ENCODE measurements at regions of chr17 and their contacts with region 1.

Region 1: DNA sequence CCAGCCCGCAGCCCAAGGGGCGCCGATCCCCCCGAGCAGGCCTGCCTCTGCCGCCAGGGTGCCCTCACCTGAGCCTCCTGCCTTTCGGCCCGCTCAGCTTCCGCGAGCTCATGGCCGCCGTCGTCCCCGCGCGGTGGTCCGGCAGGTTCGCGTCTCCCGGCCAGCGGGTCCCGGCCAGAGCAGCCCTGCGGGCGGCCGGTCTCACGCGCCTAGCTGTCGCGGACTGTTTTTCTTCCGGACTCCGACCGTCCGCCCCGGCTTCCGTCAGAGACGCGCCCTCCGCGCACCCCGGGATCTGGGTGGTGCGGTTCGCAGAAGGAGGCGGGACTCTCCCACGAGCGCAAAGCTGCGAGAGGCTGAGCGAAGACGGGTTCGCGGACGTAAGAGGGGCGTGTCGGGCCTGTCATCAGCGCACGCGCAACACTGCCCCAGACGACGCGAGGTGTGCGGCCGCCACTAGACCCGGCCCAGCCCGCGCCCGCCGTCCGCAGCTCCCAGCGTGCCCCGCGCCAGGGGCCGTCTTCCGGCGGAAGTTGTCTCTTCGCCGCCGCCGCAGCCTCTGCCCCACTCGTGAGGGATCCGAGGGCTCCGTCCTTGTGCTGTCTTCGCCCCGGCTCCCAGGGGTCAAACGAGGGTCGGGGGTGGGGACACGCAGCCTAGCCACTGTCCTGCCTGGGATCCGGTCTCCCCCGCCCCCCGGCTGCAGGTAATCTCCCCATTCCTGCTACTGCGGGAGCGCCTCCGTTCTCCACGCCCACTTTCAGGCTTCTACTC is at the start of gene INPP5K:
- DNase-seq: peak; percentile 99
- ATAC-seq: peak; percentile 95
- H3K4me3 Mint-ChIP-seq: peak within 1 kb of the TSS; percentile 81
- H3K27ac Mint-ChIP-seq: peak within 1 kb of the TSS; percentile 90
- H3K4me1 Mint-ChIP-seq: peaks cover 22% of the 10 kb centered on the region
- H3K27me3 Mint-ChIP-seq: no peaks in the 10 kb centered on the region
- total RNA-seq, gene INPP5K: 40.6 to 43.4 TPM

Region 2: GRCh38 chr17:1260086-1260769 is 256.3 kb before region 1 on chr17:
- CTCF ChIA-PET with region 1: interaction called, 18 read pairs
- DNase-seq: no peak
- ATAC-seq: no peak
- H3K4me3 Mint-ChIP-seq: no peak overlapping the region
- H3K27ac Mint-ChIP-seq: no peak overlapping the region
- H3K4me1 Mint-ChIP-seq: peaks cover 42% of the 10 kb centered on the region
- H3K27me3 Mint-ChIP-seq: peaks cover 26% of the 10 kb centered on the region

Region 3: DNA sequence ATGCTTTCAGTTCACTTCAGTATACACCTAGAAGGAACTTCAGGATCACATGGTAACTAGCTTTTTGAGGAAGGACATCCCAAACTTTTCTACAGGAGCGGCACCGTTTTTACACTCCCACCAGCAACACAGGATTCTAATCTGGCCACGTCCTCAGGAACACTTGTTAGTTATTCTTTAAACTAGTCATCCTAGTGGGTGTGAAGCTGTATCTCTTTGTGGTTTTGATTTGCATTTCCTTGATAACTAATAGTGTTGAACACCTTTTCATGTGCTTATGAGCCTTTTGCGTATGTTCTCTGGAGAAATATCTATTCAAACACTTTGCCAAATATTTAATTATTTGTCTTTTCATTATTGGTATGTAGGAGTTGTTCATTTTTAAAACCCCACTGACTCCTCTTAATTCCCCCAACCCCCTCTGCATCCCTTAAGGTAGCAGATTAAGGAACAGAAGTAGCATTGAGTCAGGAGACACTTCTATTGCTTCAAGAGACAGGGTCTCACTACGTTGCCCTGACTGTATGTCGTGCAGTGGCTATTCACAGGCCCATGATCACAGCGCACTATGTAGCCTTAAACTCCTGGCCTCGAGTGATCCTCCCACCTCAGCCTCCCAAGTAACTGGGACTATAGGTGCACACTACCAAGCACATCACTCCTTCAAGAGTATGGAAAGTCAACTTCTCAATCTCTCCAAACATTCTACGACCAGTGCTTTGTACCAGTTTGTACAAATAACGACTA is 142.0 kb before region 1 on chr17:
- CTCF ChIA-PET with region 1: interaction called, 14 read pairs
- DNase-seq: no peak
- ATAC-seq: peak; percentile 48
- H3K4me3 Mint-ChIP-seq: no peak overlapping the region
- H3K27ac Mint-ChIP-seq: peak overlapping the region; percentile 41
- H3K4me1 Mint-ChIP-seq: peaks cover 71% of the 10 kb centered on the region
- H3K27me3 Mint-ChIP-seq: no peaks in the 10 kb centered on the region

Region 4: GRCh38 chr17:1488030-1488863 is 28.3 kb before region 1 on chr17:
- CTCF ChIA-PET with region 1: interaction called, 26 read pairs
- DNase-seq: peak; percentile 76
- ATAC-seq: peak; percentile 36
- H3K4me3 Mint-ChIP-seq: peak overlapping the region; percentile 74
- H3K27ac Mint-ChIP-seq: peak overlapping the region; percentile 87
- H3K4me1 Mint-ChIP-seq: peaks cover 30% of the 10 kb centered on the region
- H3K27me3 Mint-ChIP-seq: peaks cover 4% of the 10 kb centered on the region

Region 5: DNA sequence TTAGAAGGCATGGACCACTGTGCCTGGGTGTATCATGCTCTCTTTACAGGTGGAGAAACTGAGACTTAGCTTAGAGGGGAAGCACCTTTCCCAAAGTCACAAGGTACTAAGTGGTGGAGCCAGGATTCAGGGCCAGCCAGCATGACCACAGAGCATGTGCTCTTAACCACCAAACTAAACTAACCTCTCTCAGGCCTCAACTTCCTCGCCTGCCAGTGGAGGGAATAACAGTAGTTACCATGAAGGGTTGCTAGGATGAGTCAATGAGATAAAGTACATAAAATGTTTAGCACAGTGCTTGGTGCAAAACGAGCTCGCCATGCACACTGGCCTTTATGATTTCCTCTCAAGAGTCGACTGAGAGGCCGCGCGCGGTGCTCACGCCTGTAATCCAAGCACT is 17.7 kb before region 1 on chr17:
- CTCF ChIA-PET with region 1: interaction called, 14 read pairs
- DNase-seq: peak; percentile 49
- ATAC-seq: peak; percentile 46
- H3K4me3 Mint-ChIP-seq: no peak overlapping the region
- H3K27ac Mint-ChIP-seq: no peak overlapping the region
- H3K4me1 Mint-ChIP-seq: peaks cover 9% of the 10 kb centered on the region
- H3K27me3 Mint-ChIP-seq: no peaks in the 10 kb centered on the region

Region 6: GRCh38 chr17:1532836-1533602 is 16.4 kb after region 1 on chr17:
- CTCF ChIA-PET with region 1: interaction called, 13 read pairs
- DNase-seq: peak; percentile 56
- ATAC-seq: peak; percentile 68
- H3K4me3 Mint-ChIP-seq: no peak overlapping the region
- H3K27ac Mint-ChIP-seq: no peak overlapping the region
- H3K4me1 Mint-ChIP-seq: no peaks in the 10 kb centered on the region
- H3K27me3 Mint-ChIP-seq: no peaks in the 10 kb centered on the region

Region 7: GRCh38 chr17:1628856-1629646 is 112.5 kb after region 1 on chr17:
- CTCF ChIA-PET with region 1: interaction called, 24 read pairs
- DNase-seq: peak; percentile 94
- ATAC-seq: peak; percentile 83
- H3K4me3 Mint-ChIP-seq: peak overlapping the region; percentile 81
- H3K27ac Mint-ChIP-seq: peak overlapping the region; percentile 72
- H3K4me1 Mint-ChIP-seq: peaks cover 7% of the 10 kb centered on the region
- H3K27me3 Mint-ChIP-seq: peaks cover 38% of the 10 kb centered on the region